IMR-90 (cell line): ENCODE measurements at regions of chr6 and their contacts with region 1.

Region 1: DNA sequence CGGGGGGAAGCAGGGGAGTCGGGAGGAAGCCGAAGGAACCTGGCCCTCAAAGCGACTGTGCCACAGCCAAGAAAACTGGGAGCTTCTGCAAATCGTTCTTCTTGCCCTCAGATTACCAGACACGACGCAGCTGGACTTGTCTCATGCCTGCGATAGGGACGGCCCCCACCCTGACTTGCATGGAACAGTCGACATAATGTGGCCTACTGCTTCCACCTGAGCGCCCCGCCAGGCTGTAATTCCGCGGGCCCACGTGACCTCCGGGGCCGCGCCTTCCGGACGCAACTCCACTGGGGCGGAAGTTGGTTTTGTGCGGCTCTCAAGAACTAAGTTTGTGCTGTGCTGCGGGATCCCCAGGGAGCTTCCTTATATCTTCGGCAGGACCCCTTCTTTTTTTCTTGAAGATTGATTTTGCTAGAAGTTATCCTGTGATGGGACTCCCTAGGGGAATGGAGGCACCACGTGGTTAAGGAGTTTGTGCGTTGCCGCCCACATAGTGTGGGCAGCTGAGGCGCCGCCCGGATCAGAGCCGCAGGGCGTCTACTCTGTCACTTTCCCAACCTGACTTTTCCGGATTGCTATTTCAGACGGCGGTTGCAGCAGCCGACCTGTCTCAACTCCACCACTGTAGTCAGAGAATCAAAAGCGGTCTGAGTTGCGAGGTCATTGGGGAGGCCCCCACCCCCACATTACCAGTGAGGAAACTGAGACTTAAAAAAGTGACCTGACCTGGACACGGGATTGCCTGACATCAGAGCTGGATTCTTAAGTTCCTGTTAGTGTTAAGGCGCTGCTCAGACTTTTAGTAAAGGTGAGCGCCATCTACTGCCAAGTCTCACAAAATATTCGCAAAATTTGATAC is 540 bp upstream of the CD164 start:
- DNase-seq: peak; percentile 92
- ATAC-seq: peak; percentile 81
- H3K4me3 ChIP-seq: peak overlapping the region; percentile 64
- H3K27ac ChIP-seq: peak overlapping the region; percentile 98
- H3K4me1 ChIP-seq: no peaks in the 10 kb centered on the region
- H3K27me3 ChIP-seq: peaks cover 6% of the 10 kb centered on the region
- CTCF ChIP-seq: peak; percentile 52
- POLR2A ChIP-seq: peak; percentile 47; the same call in 1 of the 2 replicates
- RAD21 ChIP-seq: peak; percentile 43

Region 2: DNA sequence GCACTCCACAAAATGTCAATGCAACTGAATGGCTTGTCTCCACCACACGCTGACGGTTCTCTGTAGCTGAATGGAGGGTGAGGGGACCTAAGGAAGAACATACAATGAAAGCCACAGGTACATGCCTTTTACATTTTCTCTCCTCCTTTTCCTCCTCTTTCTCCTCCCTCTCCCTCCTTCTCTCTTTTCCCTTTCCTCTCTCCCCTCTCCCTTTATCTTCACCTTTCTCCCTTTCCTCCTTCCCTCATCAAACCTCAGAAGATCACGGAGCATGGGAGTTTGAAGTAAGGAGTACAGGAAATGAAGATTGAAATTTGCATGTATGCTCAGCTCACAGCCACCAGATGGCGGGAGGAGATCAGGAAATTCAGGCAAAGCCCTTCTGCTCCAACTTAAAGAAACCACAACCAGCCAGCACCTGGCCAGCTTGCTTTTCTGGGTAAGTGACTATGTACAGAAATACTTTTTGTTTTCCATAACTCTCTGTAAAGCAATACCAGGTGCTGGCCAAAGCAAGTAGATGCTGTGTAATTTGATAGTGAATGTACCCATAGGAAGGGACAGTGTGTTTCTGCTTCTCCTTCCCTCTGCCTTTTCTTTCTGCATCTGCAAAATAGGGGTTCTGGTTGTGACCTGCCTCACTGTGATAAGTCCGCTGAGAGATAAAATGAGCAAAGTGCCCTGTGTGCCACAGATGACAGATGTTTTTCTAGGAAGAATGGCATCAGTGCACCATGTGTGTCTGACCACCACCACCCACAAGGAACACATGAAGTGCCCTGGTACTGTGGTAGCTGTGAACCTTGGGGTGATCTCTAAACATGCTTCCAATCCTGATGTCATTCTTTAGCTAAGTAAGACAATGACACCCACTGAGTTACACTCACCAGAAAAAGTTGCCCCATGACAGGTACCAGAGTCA is 840.7 kb before region 1 on chr6:
- CTCF ChIA-PET with region 1: no interaction called
- POLR2A ChIA-PET with region 1: no interaction called
- dilution Hi-C with region 1: no loop called
- in situ Hi-C with region 1: loop called (anchors 25 kb)
- intact Hi-C with region 1: no loop called
- DNase-seq: peak; percentile 87
- ATAC-seq: peak; percentile 86
- H3K4me3 ChIP-seq: no peak overlapping the region
- H3K27ac ChIP-seq: no peak overlapping the region
- H3K4me1 ChIP-seq: peaks cover 10% of the 10 kb centered on the region
- H3K27me3 ChIP-seq: no peaks in the 10 kb centered on the region
- CTCF ChIP-seq: peak; percentile 91
- POLR2A ChIP-seq: peak; percentile 47; the same call in 1 of the 2 replicates
- RAD21 ChIP-seq: peak; percentile 100

Region 3: DNA sequence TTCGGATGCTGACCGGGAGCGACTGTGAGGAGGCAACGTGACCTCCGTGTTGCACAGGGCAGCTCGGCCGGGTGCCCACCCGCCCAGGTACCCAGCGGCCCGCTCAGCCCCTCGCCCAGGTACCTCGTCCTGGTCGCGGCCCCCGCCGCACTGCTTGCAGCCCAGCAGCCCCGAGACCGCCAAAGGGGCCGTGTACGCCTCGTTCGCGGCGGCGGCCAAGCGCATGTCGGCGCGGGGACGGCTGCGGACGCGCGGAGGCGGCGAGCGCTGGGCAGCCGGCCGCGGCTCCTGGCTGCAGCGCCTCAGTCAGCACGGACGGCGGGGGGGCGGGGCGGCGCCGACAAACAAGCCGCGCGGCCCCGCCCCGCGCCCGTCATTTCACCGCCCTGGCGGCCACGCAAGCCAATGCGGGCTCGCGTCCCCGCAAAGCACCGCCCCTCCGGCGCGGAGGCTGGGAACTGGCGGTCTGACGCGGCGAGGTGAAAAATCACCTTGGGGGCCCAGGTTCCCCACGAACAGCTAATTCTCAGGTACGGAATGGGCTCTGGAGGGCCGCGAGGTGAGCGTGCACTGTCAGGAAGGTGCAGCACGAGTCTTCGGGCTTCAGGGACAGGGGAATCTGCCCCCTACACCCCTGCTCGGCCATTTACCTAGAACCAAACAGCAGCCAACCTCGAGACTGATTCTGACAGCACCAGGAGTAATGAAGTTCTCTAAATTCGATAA is 373.4 kb before region 1 on chr6:
- CTCF ChIA-PET with region 1: no interaction called
- POLR2A ChIA-PET with region 1: no interaction called
- dilution Hi-C with region 1: no loop called
- in situ Hi-C with region 1: no loop called
- intact Hi-C with region 1: loop called (anchors 5 kb)
- DNase-seq: peak; percentile 82
- ATAC-seq: peak; percentile 100
- H3K4me3 ChIP-seq: peak overlapping the region; percentile 91
- H3K27ac ChIP-seq: peak overlapping the region; percentile 79
- H3K4me1 ChIP-seq: no peaks in the 10 kb centered on the region
- H3K27me3 ChIP-seq: no peaks in the 10 kb centered on the region
- CTCF ChIP-seq: no peak
- POLR2A ChIP-seq: no peak
- RAD21 ChIP-seq: no peak

Region 4: DNA sequence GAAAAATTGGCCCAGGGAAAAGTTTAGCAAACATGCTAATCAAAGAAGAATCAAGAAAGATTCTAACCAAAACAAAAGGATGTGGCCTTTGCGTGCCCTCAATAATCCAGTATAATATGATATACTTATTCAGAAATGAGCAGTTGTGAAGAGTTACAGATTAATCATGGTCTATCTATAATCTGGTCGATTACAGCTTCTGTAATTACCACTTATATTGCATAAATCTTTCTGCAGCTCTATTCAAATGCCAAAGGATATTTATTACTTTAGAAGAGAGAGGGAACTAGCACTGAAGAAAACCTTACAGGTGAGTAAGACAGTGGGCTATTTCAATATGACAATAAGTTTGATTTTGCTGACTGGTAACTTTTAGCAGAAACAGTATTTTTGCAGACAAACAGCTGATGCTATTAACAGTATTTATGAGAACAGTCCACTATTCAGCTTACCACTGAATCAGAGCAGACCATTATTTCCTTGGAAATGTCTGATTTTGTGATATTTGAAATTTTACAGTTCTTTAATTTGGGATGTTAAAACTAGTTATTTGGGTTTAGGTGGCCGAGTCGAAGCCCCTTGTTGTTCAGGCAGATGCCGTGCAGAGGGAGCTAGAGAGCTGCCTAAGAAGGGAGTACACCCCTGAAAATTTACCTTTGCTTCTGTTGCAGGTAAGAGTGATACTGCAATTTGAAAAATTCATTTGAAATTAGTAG is 195.2 kb before region 1 on chr6:
- CTCF ChIA-PET with region 1: interaction called, 14 read pairs
- POLR2A ChIA-PET with region 1: interaction called, 5 read pairs
- dilution Hi-C with region 1: no loop called
- in situ Hi-C with region 1: loop called (anchors 25 kb)
- intact Hi-C with region 1: loop called (anchors 1 kb)
- DNase-seq: peak; percentile 28
- ATAC-seq: peak; percentile 64
- H3K4me3 ChIP-seq: no peak overlapping the region
- H3K27ac ChIP-seq: no peak overlapping the region
- H3K4me1 ChIP-seq: no peaks in the 10 kb centered on the region
- H3K27me3 ChIP-seq: peaks cover 17% of the 10 kb centered on the region
- CTCF ChIP-seq: peak; percentile 69
- POLR2A ChIP-seq: no peak
- RAD21 ChIP-seq: peak; percentile 81

Region 5: GRCh38 chr6:109308018-109308492 is 74.8 kb before region 1 on chr6:
- CTCF ChIA-PET with region 1: no interaction called
- POLR2A ChIA-PET with region 1: no interaction called
- dilution Hi-C with region 1: no loop called
- in situ Hi-C with region 1: no loop called
- intact Hi-C with region 1: no loop called
- DNase-seq: peak; percentile 63
- ATAC-seq: peak; percentile 92
- H3K4me3 ChIP-seq: no peak overlapping the region
- H3K27ac ChIP-seq: no peak overlapping the region
- H3K4me1 ChIP-seq: peaks cover 1% of the 10 kb centered on the region; the same call in 1 of the 2 replicates
- H3K27me3 ChIP-seq: peaks cover 5% of the 10 kb centered on the region
- CTCF ChIP-seq: no peak
- POLR2A ChIP-seq: no peak
- RAD21 ChIP-seq: no peak

Region 6: GRCh38 chr6:109690737-109691621 is 308.2 kb after region 1 on chr6 and contains the starts of genes AK9 and FIG4:
- CTCF ChIA-PET with region 1: no interaction called
- POLR2A ChIA-PET with region 1: no interaction called
- dilution Hi-C with region 1: no loop called
- in situ Hi-C with region 1: no loop called
- intact Hi-C with region 1: loop called (anchors 10 kb)
- DNase-seq: peak; percentile 90
- ATAC-seq: peak; percentile 99
- H3K4me3 ChIP-seq: peak within 1 kb of the TSS; percentile 74
- H3K27ac ChIP-seq: peak within 1 kb of the TSS; percentile 41
- H3K4me1 ChIP-seq: no peaks in the 10 kb centered on the region; the same call in 1 of the 2 replicates
- H3K27me3 ChIP-seq: no peaks in the 10 kb centered on the region
- CTCF ChIP-seq: 0 out of 2 replicates have a peak, but pooled peaks have one; percentile 13
- POLR2A ChIP-seq: peak; percentile 58
- RAD21 ChIP-seq: peak; percentile 41
- total RNA-seq, gene AK9: 1.8 and 2.2 TPM in 2 replicates
- total RNA-seq, gene FIG4: 15.4 and 19.7 TPM in 2 replicates